H1 (cell line): ENCODE measurements at regions of chr10 and their contacts with region 1.

Region 1: GRCh38 chr10:59580026-59580863 is 129.4 kb downstream of the SLC16A9 start:
- DNase-seq: no peak
- H3K4me3 ChIP-seq: no peak overlapping the region
- H3K27ac ChIP-seq: no peak overlapping the region
- H3K4me1 ChIP-seq: no peaks in the 10 kb centered on the region
- H3K27me3 ChIP-seq: no peaks in the 10 kb centered on the region
- CTCF ChIP-seq: peak in 2 of 3 experiments; percentile 33 to 44; a peak in 2 of 4 replicates
- EP300 ChIP-seq: no peak
- POLR2A ChIP-seq: no peak
- RAD21 ChIP-seq: peak; percentile 79 to 80

Region 2: DNA sequence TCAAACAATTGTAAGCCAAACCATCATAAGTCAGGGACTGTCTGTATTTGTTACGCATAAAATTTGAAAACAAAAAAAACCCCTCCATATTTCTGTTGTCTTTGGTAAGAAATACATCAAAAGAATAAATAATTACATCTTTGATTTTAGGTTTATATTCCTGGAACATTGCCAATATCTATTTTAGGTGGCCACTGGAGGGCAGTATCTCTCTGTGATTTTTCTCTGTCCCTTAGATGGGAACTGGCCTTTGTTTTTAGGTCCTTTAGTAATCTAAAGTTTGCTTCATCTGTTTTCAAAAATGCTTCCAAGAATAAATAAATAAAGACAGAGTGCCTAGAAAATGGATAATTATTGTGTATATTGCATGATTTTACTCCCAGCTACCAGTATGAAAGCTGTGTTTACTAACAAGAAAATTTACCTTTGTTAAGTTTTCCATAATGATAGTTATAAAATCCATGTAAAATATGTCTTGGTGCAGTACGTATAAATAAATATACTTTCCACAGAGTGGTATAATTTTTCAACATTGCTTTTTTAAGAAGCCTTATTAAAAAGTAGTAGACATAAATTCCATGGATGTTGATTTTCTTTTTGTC is 339.6 kb before region 1 on chr10:
- CTCF ChIA-PET with region 1: interaction called, 13 read pairs
- POLR2A ChIA-PET with region 1: no interaction called
- DNase-seq: peak in 1 of 2 experiments; percentile 49
- H3K4me3 ChIP-seq: no peak overlapping the region
- H3K27ac ChIP-seq: no peak overlapping the region
- H3K4me1 ChIP-seq: no peaks in the 10 kb centered on the region
- H3K27me3 ChIP-seq: no peaks in the 10 kb centered on the region
- CTCF ChIP-seq: peak in 2 of 3 experiments; percentile 39 to 42; a peak in 2 of 4 replicates
- EP300 ChIP-seq: no peak
- POLR2A ChIP-seq: no peak
- RAD21 ChIP-seq: peak; percentile 83 to 86

Region 3: DNA sequence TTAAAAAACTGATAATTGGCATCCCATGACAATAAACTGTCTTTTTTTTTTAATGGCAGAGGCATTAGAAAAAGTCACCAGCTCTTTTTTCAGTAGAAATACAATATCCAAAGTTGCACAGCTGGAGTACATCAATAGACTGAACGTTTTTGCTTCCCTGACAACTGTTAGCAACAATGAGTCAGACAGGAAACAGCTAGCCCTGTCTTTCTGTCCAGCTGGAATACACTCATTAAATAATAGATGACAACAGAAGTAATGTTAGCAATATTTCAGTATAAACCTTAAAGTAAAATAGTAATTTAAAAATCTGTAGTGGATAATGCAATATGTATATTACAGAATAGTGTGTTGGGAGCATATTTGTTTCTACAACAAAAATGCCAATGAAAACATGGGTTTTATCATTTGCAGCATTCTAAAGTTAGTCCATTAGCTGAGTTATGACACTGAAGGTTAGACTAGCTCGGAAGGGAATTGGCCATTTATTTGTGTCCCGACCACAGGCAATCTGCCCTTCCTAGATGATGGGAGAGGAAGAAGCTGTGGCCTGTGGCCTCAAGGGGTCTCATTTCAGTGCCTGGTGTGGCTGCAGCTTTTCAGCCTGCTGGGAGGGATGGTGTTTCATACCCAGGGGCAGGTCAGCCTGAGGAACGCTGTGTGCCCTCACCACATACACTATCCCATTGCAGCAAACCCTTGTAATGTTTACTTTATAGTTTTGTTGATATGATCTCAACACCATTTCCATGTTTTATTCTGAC is 43.9 kb before region 1 on chr10:
- CTCF ChIA-PET with region 1: interaction called, 14 read pairs
- POLR2A ChIA-PET with region 1: interaction called, 3 read pairs
- DNase-seq: no peak
- H3K4me3 ChIP-seq: no peak overlapping the region
- H3K27ac ChIP-seq: no peak overlapping the region
- H3K4me1 ChIP-seq: peaks cover 0 to 4% (median 1%) of the 10 kb centered on the region in 4 experiments; a peak in 2 of 7 replicates
- H3K27me3 ChIP-seq: no peaks in the 10 kb centered on the region
- CTCF ChIP-seq: peak in 2 of 3 experiments; percentile 15 to 23; a peak in 2 of 4 replicates
- EP300 ChIP-seq: no peak
- POLR2A ChIP-seq: no peak
- RAD21 ChIP-seq: no peak

Region 4: GRCh38 chr10:59563531-59563930 is 16.7 kb before region 1 on chr10:
- CTCF ChIA-PET with region 1: interaction called, 29 read pairs
- POLR2A ChIA-PET with region 1: no interaction called
- DNase-seq: no peak
- H3K4me3 ChIP-seq: no peak overlapping the region
- H3K27ac ChIP-seq: no peak overlapping the region
- H3K4me1 ChIP-seq: no peaks in the 10 kb centered on the region
- H3K27me3 ChIP-seq: no peaks in the 10 kb centered on the region
- CTCF ChIP-seq: no peak
- EP300 ChIP-seq: no peak
- POLR2A ChIP-seq: no peak
- RAD21 ChIP-seq: no peak